Mammary epithelial cell (primary cell): ENCODE measurements at regions of chr7 and their contacts with region 1.

Region 1: DNA sequence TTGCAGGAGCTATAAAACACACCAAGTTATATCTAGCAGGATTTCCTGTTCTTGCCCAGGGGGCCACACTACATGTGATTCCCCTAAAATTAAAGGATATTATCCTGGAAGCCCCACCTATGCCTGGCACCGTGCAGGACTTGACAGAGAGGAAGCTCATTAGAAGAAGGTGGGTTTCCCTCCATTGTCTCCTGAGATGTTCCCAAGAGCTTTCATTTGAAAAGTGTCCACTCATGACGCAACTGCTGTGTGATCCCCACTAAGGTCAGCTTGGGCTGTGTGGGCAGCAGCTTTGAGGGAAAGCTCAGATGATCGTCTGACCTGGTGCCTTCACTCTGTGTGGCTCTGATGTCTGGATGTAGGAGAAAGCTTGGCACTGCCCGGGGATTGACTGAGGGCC is 53.5 kb downstream of the RAMP3 start:
- DNase-seq: no peak
- H3K4me3 ChIP-seq: no peak overlapping the region
- H3K27ac ChIP-seq: no peak overlapping the region
- H3K4me1 ChIP-seq: no peaks in the 10 kb centered on the region
- H3K27me3 ChIP-seq: peaks cover 15% of the 10 kb centered on the region
- CTCF ChIP-seq: no peak

Region 2: DNA sequence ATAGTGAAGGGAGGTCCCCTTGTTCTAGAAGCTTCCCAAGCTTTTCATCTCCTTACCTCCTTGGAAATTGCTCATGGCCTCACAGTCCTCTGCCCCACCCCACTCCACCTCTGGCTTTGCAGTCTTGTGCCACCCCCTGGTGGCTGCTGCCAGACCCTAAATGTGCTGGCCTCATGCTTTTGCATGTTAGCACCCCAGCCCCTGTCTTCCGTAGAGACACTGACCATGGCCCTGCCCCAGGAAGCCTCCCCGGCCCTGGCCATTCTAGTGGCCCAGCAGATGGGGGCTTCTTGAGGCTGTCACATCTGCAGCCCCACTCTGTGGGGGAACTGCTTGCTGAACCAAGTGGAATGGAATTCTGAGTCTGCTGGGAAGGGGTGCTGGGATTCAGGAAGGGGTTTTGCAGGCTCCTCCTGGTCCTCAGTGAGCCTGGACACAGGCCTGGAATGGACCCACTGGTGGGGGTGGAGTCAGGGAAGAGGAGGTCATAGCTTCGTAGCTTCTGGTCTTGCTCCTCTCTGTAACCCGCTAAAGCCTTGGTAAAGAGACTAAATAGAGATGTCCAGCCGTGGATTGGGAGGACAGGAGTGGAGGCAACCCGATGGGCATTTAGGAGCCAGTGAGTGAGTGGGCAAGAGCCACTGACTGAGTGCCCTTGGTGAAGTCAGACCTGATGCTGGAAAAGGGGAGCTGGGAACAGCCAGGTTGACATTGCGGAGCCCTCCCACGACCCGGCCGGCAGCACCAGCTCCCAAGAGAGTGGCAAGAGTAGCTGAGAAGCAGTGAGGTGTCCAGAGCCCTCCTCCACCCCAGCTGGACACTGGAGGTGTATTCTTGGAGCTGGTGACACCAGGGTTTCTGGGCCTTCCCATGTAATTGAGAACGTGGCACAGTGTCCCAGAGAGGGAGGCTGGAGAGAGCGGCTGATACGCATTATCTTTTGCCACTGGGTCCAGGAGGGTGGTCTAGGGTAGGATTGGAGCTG is 32.5 kb before region 1 on chr7:
- CTCF ChIA-PET with region 1: no interaction called
- dilution Hi-C with region 1: loop called (anchors 5 kb)
- in situ Hi-C with region 1: no loop called
- intact Hi-C with region 1: no loop called
- DNase-seq: no peak
- H3K4me3 ChIP-seq: no peak overlapping the region
- H3K27ac ChIP-seq: no peak overlapping the region
- H3K4me1 ChIP-seq: no peaks in the 10 kb centered on the region
- H3K27me3 ChIP-seq: no peaks in the 10 kb centered on the region
- CTCF ChIP-seq: no peak

Region 3: DNA sequence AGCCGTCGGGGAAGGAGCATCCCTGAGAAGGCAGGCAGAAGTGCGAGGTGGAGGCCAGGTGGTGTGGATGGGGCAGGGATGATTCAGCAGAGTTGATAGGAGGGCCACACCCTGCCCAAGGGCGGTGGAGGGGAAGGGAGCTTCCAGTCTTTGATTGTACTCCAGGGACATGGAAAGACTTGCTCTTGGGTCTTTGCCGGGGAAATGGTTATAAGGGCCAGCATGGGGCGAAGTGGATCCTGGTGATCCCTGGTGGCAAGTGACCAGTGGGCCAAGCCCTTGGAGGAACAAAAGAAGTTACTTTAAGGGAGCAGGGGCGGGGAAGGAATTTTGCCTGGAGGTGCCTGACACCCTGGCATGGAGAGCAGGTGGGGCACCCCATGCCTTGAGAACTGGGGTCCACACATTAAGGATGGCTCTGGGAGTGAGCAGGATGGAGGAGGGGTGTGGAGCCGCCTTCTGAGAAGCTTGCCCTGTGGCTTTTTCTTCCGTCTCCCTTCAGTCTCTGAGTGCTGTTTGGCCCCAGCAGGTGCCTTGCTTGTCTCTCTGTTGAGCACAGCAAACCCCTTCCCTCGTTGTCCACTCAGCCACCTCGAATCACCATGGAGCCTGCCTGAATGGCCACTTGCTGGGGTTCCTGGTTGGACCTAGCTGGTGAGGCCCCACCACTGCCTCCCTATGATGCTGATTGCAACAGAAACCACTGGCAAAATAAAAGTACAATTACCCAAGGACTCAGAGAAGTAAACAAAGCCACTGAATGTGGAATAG is 30.5 kb after region 1 on chr7:
- CTCF ChIA-PET with region 1: no interaction called
- dilution Hi-C with region 1: no loop called
- in situ Hi-C with region 1: no loop called
- intact Hi-C with region 1: no loop called
- DNase-seq: peak; percentile 20
- H3K4me3 ChIP-seq: no peak overlapping the region
- H3K27ac ChIP-seq: no peak overlapping the region
- H3K4me1 ChIP-seq: peaks cover 39% of the 10 kb centered on the region
- H3K27me3 ChIP-seq: no peaks in the 10 kb centered on the region
- CTCF ChIP-seq: no peak

Region 4: DNA sequence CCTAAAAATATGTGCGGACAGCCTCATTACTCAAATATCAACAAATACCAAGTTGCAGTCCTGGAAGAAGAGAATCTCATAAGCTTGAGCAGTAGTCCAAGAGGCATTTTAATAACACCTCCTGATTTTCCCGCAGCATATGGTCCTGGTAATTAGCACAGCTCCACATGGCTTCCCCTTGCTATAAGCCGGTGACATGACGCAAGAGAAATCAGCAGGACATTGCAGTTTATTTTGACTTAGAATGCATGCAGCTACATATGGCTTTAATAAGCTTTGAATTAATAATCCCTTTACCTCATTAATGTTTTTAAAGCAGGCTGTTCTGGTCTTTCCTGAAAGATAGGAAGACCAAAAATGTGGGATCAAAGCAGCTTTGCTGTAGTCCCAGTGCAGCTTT is 84.2 kb after region 1 on chr7:
- CTCF ChIA-PET with region 1: no interaction called
- dilution Hi-C with region 1: loop called (anchors 5 kb)
- in situ Hi-C with region 1: no loop called
- intact Hi-C with region 1: no loop called
- DNase-seq: no peak
- H3K4me3 ChIP-seq: no peak overlapping the region
- H3K27ac ChIP-seq: no peak overlapping the region
- H3K4me1 ChIP-seq: no peaks in the 10 kb centered on the region
- H3K27me3 ChIP-seq: no peaks in the 10 kb centered on the region
- CTCF ChIP-seq: no peak

Region 5: GRCh38 chr7:45306752-45307305 is 95.8 kb after region 1 on chr7:
- CTCF ChIA-PET with region 1: no interaction called
- dilution Hi-C with region 1: no loop called
- in situ Hi-C with region 1: no loop called
- intact Hi-C with region 1: no loop called
- DNase-seq: no peak
- H3K4me3 ChIP-seq: no peak overlapping the region
- H3K27ac ChIP-seq: no peak overlapping the region
- H3K4me1 ChIP-seq: no peaks in the 10 kb centered on the region
- H3K27me3 ChIP-seq: no peaks in the 10 kb centered on the region
- CTCF ChIP-seq: no peak